AG04449 (cell line): ENCODE measurements at regions of chr14 and their contacts with region 1.

Region 1: DNA sequence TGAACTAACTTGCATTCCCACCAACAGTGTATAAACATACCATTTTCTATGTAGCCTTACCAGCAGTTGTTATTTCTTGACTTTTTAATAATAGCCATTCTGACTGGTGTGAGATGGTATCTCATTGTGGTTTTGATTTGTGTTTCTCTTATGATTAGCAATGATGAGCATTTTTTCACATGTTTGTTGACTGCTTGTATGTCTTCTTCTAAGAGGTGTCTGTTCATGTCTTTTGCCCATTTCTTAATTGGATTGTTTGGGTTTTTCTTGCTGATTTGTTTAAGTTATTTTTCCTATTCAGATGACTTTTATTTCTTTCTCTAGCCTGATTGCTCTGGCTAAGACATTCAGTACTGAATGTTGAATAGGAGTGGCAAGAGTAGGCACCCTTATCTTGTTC is 230.3 kb downstream of the DAD1 start:
- DNase-seq: no peak
- H3K4me3 ChIP-seq: no peak overlapping the region
- CTCF ChIP-seq: no peak

Region 2: GRCh38 chr14:21612324-21612723 is 746.4 kb before region 1 on chr14:
- CTCF ChIA-PET with region 1: no interaction called
- POLR2A ChIA-PET with region 1: no interaction called
- DNase-seq: no peak
- H3K4me3 ChIP-seq: no peak overlapping the region
- CTCF ChIP-seq: no peak

Region 3: GRCh38 chr14:22375321-22375930 is 16.7 kb after region 1 on chr14:
- CTCF ChIA-PET with region 1: interaction called, 36 read pairs
- POLR2A ChIA-PET with region 1: no interaction called
- DNase-seq: no peak
- H3K4me3 ChIP-seq: no peak overlapping the region
- CTCF ChIP-seq: peak; percentile 39